ENCODE measurements at regions of chr3 and their contacts with region 1.

Region 1: GRCh38 chr3:126433496-126434263 is 39.0 kb downstream of the CFAP100 start:
- DNase-seq: no peak
- H3K4me3 ChIP-seq: no peak overlapping the region
- H3K27ac ChIP-seq: no peak overlapping the region
- H3K4me1 ChIP-seq: no peaks in the 10 kb centered on the region; a peak in 1 of 7 replicates
- H3K27me3 ChIP-seq: no peaks in the 10 kb centered on the region
- CTCF ChIP-seq: no peak
- EP300 ChIP-seq: no peak
- POLR2A ChIP-seq: no peak
- RAD21 ChIP-seq: no peak

Region 2: GRCh38 chr3:126446791-126447190 is 13.1 kb after region 1 on chr3:
- CTCF ChIA-PET with region 1: interaction called, 6 read pairs
- POLR2A ChIA-PET with region 1: interaction called, 13 read pairs
- DNase-seq: no peak
- H3K4me3 ChIP-seq: no peak overlapping the region
- H3K27ac ChIP-seq: no peak overlapping the region
- H3K4me1 ChIP-seq: peaks cover 0 to 9% (median 2%) of the 10 kb centered on the region in 4 experiments; a peak in 3 of 7 replicates
- H3K27me3 ChIP-seq: no peaks in the 10 kb centered on the region
- CTCF ChIP-seq: no peak
- EP300 ChIP-seq: no peak
- POLR2A ChIP-seq: no peak
- RAD21 ChIP-seq: no peak

Measured in H1 (cell line).